Activated CD4-positive, alpha-beta T cell treated with anti-CD3 and anti-CD28 coated beads, Interleukin-2, amount 10 ng/mL, durations not matched to agents 24 days and 14 days (primary cell): ENCODE measurements at regions of chr6 and their contacts with region 1.

Region 1: GRCh38 chr6:144095331-144096002 is at the start of gene SF3B5:
- DNase-seq: peak; percentile 99
- H3K4me3 Mint-ChIP-seq: peak within 1 kb of the TSS; percentile 95
- H3K27ac Mint-ChIP-seq: peak within 1 kb of the TSS; percentile 92
- H3K4me1 Mint-ChIP-seq: peaks cover 26% of the 10 kb centered on the region
- H3K27me3 Mint-ChIP-seq: peaks cover 2% of the 10 kb centered on the region
- total RNA-seq, gene SF3B5: 214 and 217 TPM in 2 replicates

Region 2: GRCh38 chr6:143450453-143451371 is 644.8 kb before region 1 on chr6 and contains the starts of genes ADAT2 and PEX3:
- intact Hi-C with region 1: loop called (anchors 1 kb)
- DNase-seq: peak; percentile 98
- H3K4me3 Mint-ChIP-seq: peak within 1 kb of the TSS; percentile 91
- H3K27ac Mint-ChIP-seq: peak within 1 kb of the TSS; percentile 99
- H3K4me1 Mint-ChIP-seq: peaks cover 36% of the 10 kb centered on the region
- H3K27me3 Mint-ChIP-seq: no peaks in the 10 kb centered on the region
- total RNA-seq, gene ADAT2: 46.0 and 47.7 TPM in 2 replicates
- total RNA-seq, gene PEX3: 26.0 and 28.5 TPM in 2 replicates

Region 3: DNA sequence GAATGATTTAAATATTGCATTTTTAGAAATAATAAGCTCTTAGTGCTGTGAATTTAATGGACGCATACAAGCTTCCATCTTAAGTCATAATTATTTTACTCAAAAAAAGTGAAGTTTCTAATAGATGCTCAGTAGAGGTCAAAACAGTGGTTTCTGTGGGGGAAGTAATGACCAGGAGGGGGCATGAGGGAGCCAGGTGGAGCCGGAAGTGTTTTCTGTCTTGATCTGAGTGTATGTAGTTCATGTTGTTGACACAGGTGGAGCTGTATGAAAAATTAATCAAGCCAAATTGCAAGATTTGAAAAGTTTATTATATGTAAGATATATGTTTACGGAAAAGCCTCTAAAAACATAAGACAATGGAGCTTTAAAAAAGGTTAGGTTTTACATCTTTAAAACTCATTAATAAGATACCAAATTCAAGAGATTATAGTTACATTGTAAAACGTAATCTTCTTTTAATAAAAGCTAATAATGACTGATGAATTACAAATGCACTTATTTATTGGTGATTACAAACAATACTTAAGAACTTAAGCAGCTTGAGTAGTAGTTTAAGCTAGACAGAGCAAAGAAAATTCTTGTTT is 155.4 kb before region 1 on chr6:
- intact Hi-C with region 1: loop called (anchors 5 kb)
- DNase-seq: peak; percentile 86
- H3K4me3 Mint-ChIP-seq: no peak overlapping the region
- H3K27ac Mint-ChIP-seq: no peak overlapping the region
- H3K4me1 Mint-ChIP-seq: peaks cover 7% of the 10 kb centered on the region
- H3K27me3 Mint-ChIP-seq: peaks cover 2% of the 10 kb centered on the region

Region 4: DNA sequence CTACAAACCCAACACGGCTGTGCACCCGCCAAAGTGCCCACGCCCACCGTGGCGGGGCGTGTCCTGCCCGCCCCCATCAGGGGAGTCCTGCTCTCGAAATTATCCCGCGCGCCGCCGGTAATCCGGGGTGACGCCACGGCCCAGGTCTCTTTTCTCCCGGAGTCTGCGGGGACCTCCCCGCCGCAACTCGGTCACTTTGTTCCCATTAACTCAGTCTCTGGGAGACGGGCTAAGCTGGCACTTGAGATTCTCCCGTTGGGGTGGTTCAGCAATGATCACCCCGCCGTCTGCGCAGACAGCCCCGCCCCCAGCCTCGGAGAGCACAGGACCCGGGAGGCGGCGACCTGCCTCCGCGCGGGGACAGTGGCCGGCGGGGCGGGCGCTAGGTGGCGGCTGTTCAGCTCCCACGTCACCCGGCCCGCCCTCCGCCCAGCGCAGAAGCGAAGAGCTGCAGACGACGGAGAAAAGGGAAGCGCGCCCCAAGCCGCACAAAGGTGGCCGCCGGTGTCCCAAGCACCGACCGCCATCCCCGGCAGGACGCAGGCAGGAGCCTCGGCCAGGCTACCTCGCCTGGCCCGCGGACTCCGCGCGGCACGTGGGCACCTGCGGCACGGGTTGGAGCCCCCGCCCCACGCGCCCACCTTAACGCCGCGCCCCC is 31.6 kb before region 1 on chr6:
- intact Hi-C with region 1: loop called (anchors 1 kb)
- DNase-seq: peak; percentile 97
- H3K4me3 Mint-ChIP-seq: peak overlapping the region; percentile 92
- H3K27ac Mint-ChIP-seq: peak overlapping the region; percentile 91
- H3K4me1 Mint-ChIP-seq: peaks cover 41% of the 10 kb centered on the region
- H3K27me3 Mint-ChIP-seq: no peaks in the 10 kb centered on the region

Region 5: GRCh38 chr6:144215932-144216667 is 120.6 kb after region 1 on chr6:
- intact Hi-C with region 1: loop called (anchors 1 kb)
- DNase-seq: peak; percentile 97
- H3K4me3 Mint-ChIP-seq: peak overlapping the region; percentile 93
- H3K27ac Mint-ChIP-seq: peak overlapping the region; percentile 98
- H3K4me1 Mint-ChIP-seq: peaks cover 34% of the 10 kb centered on the region
- H3K27me3 Mint-ChIP-seq: peaks cover 9% of the 10 kb centered on the region